ENCODE measurements at regions of chr14 and their contacts with region 1.

Region 1: DNA sequence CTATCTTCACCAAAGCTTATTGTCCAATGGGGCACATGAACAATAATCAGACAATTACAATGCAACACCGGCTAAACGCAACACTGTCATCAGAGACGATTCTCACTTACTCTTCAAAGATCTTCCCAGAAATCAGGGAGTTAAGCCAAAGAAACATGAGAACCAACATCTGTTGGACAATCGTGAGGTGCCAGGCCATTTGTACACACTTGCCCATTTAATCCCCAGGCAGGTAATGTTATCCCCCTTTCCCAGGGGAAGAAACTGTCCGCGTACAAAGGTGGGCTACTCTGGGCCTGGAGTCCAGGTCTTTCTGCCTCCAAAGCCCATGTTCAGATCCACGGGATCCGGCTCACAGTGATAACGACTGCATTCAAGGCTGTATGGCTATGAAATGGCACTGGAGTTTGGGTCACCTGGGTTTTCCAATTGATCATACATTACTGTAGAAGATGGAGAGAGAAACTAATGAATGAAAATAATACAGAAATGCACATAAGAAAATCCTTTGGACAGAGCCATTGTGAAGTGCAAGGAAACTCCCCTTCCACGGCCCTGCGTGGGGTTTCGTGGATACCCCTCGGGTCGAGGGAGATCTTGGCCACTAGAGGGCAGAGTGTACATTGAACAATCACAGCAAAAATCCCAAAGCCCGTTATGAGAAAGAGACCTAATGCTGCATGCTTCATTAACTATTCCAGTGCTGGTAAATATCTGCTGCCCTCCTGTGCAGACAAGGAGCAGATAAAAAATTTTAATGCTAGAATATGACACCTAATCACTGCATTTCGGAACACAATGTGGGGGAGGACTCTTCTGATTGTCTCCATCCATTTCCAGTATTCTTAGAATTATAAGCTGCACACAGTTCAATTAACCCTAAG is 111.4 kb downstream of the EGLN3 start:
- DNase-seq: peak; percentile 68
- ATAC-seq: peak; percentile 55
- H3K4me3 Mint-ChIP-seq: no peak overlapping the region
- H3K27ac Mint-ChIP-seq: no peak overlapping the region
- H3K4me1 Mint-ChIP-seq: no peaks in the 10 kb centered on the region
- H3K27me3 Mint-ChIP-seq: peaks cover 2% of the 10 kb centered on the region
- CTCF ChIP-seq: peak; percentile 75

Region 2: GRCh38 chr14:34098045-34098984 is 258.9 kb after region 1 on chr14:
- CTCF ChIA-PET with region 1: interaction called, 30 read pairs
- POLR2A ChIA-PET with region 1: no interaction called
- intact Hi-C with region 1: no loop called
- DNase-seq: peak; percentile 23
- ATAC-seq: peak; percentile 24
- H3K4me3 Mint-ChIP-seq: no peak overlapping the region
- H3K27ac Mint-ChIP-seq: no peak overlapping the region
- H3K4me1 Mint-ChIP-seq: peaks cover 12% of the 10 kb centered on the region
- H3K27me3 Mint-ChIP-seq: peaks cover 3% of the 10 kb centered on the region
- CTCF ChIP-seq: peak; percentile 67

Region 3: DNA sequence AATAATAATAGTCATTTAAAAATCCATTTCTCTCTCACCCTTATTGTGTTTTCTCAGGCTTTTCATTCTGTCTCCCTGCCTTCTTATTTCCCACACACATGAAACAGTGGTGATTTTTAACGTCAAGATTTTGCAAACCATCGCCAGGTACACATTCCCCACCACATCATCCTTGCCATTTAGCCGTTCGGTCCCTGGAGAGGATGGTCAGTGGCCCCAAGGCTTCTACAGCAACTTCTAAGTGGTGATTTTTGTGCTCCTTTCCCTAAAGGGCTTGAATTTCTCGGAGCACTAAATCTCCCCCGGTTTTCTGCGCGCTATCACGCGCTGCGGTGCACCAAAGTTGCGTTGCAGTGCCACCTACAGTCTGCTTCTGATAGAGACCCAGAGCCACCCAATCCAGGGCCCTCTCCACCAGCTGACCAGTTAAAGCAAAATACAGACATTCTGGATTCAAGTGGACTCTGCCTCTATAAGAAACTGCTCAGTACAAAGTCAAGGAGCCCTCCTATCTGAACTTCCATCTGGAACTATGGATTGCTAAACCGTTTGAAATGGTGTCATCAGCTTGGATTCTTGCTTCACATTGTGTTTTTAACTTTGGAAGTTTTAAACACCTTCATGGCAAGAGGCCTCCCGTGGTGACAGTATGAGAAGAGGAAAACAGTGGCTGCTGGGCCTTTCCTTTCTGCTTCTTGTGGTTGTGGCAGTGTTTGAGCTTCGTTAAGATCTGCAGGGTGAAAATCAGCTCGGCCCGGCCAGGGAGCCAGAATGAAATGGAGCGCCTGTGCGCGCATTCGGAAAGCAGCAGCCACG is 388.6 kb after region 1 on chr14:
- CTCF ChIA-PET with region 1: interaction called, 14 read pairs
- POLR2A ChIA-PET with region 1: no interaction called
- intact Hi-C with region 1: loop called (anchors 2 kb)
- DNase-seq: peak; percentile 68
- ATAC-seq: peak; percentile 90
- H3K4me3 Mint-ChIP-seq: no peak overlapping the region
- H3K27ac Mint-ChIP-seq: no peak overlapping the region
- H3K4me1 Mint-ChIP-seq: no peaks in the 10 kb centered on the region
- H3K27me3 Mint-ChIP-seq: peaks cover 9% of the 10 kb centered on the region
- CTCF ChIP-seq: peak; percentile 79

Region 4: GRCh38 chr14:34322940-34323418 is 483.5 kb after region 1 on chr14:
- CTCF ChIA-PET with region 1: interaction called, 11 read pairs
- POLR2A ChIA-PET with region 1: no interaction called
- intact Hi-C with region 1: loop called (anchors 10 kb)
- DNase-seq: peak; percentile 68
- ATAC-seq: peak; percentile 90
- H3K4me3 Mint-ChIP-seq: no peak overlapping the region
- H3K27ac Mint-ChIP-seq: no peak overlapping the region
- H3K4me1 Mint-ChIP-seq: no peaks in the 10 kb centered on the region
- H3K27me3 Mint-ChIP-seq: peaks cover 1% of the 10 kb centered on the region
- CTCF ChIP-seq: peak; percentile 78

Measured in activated CD8-positive, alpha-beta T cell treated with anti-CD3 and anti-CD28 coated beads for 36 hours (primary cell).